ENCODE measurements at regions of chr10 and their contacts with region 1.

Region 1: GRCh38 chr10:127198307-127199120 is 2.1 kb upstream of the INSYN2A start:
- DNase-seq: no peak
- ATAC-seq: no peak
- H3K4me3 ChIP-seq: no peak overlapping the region
- H3K4me3 Mint-ChIP-seq: no peak overlapping the region
- H3K27ac ChIP-seq: no peak overlapping the region
- H3K27ac Mint-ChIP-seq: no peak overlapping the region
- H3K4me1 ChIP-seq: no peaks in the 10 kb centered on the region
- H3K4me1 Mint-ChIP-seq: peaks cover 0 to 5% (median 0%) of the 10 kb centered on the region in 7 donors
- H3K27me3 ChIP-seq: no peaks in the 10 kb centered on the region
- H3K27me3 Mint-ChIP-seq: peaks cover 25 to 48% (median 34%) of the 10 kb centered on the region in 5 donors

Region 2: GRCh38 chr10:127221226-127221625 is 22.7 kb after region 1 on chr10:
- CTCF ChIA-PET with region 1: interaction called, 11 read pairs
- POLR2A ChIA-PET with region 1: no interaction called
- intact Hi-C with region 1: no loop called
- DNase-seq: no peak
- ATAC-seq: no peak
- H3K4me3 ChIP-seq: no peak overlapping the region
- H3K4me3 Mint-ChIP-seq: no peak overlapping the region
- H3K27ac ChIP-seq: no peak overlapping the region
- H3K27ac Mint-ChIP-seq: no peak overlapping the region
- H3K4me1 ChIP-seq: no peaks in the 10 kb centered on the region
- H3K4me1 Mint-ChIP-seq: no peaks in the 10 kb centered on the region
- H3K27me3 ChIP-seq: no peaks in the 10 kb centered on the region
- H3K27me3 Mint-ChIP-seq: peaks cover 5 to 35% (median 22%) of the 10 kb centered on the region in 5 donors

Measured in naive thymus-derived CD4-positive, alpha-beta T cell (primary cell).